ENCODE measurements at regions of chr12 and their contacts with region 1.

Region 1: DNA sequence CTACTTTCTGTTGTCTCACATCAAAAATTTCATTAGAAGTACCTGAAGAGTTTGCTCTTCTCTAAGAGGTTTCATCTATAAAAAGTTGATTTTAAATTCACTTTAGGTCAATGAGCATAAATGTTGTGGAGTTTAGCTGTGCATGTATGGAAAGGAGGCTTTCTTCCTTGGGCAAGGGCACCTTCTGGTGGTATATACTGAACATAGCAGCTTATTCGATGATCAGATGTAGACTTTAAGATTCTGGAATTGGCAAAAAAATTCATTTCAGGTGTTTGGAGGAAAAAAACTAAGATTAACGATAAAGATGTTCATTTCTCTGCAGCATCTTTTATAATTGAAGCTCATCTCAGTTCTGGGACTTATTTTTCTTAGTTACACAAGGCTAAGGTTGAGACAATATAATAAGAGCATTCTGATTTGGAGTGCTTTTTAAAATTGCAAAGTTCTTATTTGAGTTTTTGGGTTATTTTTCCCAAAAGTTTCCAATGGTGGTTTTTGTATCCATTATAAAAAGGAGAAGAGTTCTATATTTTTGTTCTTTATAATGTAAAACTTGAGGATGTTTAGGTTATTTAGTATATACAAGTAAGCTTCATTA is 46.8 kb downstream of the TMEM117 start:
- DNase-seq: peak; percentile 61
- H3K4me3 ChIP-seq: no peak overlapping the region
- CTCF ChIP-seq: peak; percentile 88

Region 2: GRCh38 chr12:43493261-43493797 is 389.3 kb before region 1 on chr12:
- in situ Hi-C with region 1: loop called (anchors 10 kb)
- DNase-seq: no peak
- H3K4me3 ChIP-seq: no peak overlapping the region
- CTCF ChIP-seq: no peak

Region 3: GRCh38 chr12:43776498-43776897 is 106.2 kb before region 1 on chr12:
- in situ Hi-C with region 1: loop called (anchors 10 kb)
- DNase-seq: no peak
- H3K4me3 ChIP-seq: no peak overlapping the region
- CTCF ChIP-seq: peak; percentile 48

Region 4: DNA sequence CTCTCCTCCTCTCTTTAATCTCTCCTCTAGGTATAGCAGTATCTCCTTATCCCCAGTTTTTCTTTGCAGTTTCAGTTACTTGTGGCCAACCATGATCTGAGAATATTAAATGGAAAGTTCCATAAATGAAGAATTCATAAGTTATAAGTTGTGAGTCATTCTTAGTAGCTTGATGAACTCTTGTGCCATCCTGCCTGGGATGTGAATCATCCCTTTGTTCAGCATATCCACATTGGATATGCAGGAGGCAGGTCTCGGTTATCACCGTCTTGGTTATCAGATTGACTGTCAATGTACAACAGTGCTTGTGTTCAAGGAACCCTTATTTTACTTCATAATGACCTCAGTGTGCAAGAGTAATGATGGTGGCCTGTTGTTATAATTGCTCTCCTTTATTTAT is 87.2 kb after region 1 on chr12:
- in situ Hi-C with region 1: no loop called
- DNase-seq: no peak
- H3K4me3 ChIP-seq: no peak overlapping the region
- CTCF ChIP-seq: no peak

Measured in astrocyte of the cerebellum (primary cell).